Right cardiac atrium (tissue), 5 donors: ENCODE measurements at regions of chr18 and their contacts with region 1.

Region 1: GRCh38 chr18:48785091-48785614 is 165.6 kb downstream of the SMAD7 start:
- DNase-seq: peak in 2 of 3 donors; percentile 37 to 57
- ATAC-seq: no peak
- H3K4me3 ChIP-seq: no peak overlapping the region
- H3K27ac ChIP-seq: no peak overlapping the region
- H3K4me1 ChIP-seq: peaks cover 45% of the 10 kb centered on the region
- H3K27me3 ChIP-seq: no peaks in the 10 kb centered on the region

Region 2: DNA sequence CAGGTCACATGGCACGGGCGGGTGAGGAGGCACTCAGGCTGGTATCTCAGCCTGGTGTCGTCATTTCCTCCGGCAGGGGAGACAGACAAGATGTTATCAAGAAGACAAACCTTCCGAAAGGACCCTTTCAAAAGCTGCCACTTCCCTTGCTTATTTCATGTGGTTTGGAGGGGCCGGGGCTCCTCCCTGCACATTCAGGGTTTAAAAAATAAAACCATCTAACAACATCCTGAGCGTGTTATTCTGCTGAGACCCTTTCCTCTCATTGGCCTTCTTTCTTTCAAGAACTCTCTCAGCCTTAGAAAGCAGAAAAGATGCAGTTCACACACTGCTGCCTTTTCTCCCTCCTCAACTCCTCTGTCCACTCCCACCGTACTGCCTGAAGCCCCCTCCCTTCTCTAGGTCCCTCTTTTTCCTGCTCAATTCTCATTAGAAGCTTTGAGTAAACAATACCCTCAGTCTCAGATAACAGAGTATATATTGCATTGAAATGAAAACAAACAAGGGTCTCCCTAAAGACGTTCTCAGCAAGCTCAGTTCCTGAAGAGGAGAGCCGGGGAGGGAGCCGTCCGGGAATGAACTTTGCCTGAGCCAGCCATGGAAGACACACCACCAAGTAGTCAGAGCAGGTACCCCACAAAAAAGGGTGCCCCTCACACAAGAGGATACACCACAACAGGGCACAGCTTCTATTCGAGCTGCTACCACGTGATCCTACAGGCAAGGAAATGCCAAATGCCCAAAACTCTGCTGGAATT is 155.9 kb after region 1 on chr18:
- intact Hi-C with region 1: loop called in 2 of 4 experiments (anchors 5 kb)
- DNase-seq: peak in 2 of 3 donors; percentile 69 to 81
- ATAC-seq: peak in 1 of 2 donors; percentile 28
- H3K4me3 ChIP-seq: peak overlapping the region; percentile 6
- H3K27ac ChIP-seq: peak overlapping the region; percentile 78
- H3K4me1 ChIP-seq: peaks cover 45% of the 10 kb centered on the region
- H3K27me3 ChIP-seq: no peaks in the 10 kb centered on the region

Region 3: DNA sequence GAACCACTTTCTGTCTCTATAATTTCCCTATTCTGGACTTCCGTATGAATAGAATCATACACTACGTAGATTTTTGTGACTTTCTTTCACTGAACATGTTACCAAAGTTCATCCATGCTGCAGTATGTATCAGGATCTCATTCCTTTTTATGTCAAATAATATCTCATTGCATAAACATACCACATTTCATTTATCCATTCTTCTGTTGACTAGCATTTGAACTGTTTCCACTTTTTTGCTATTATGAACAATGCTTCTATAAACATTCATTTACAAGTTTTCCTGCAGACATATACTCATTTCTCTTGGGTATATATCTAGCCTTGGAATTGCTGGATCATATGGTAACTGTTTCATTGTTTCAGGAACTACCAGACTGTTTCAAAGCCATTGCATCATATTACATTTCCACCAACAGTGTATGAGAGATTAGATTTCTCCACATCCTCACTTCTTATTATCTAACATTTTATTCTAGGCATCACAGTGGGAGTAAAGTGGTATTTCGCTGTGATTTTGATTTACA is 489.1 kb after region 1 on chr18:
- intact Hi-C with region 1: no loop called
- DNase-seq: no peak
- ATAC-seq: no peak
- H3K4me3 ChIP-seq: no peak overlapping the region
- H3K27ac ChIP-seq: no peak overlapping the region
- H3K4me1 ChIP-seq: no peaks in the 10 kb centered on the region
- H3K27me3 ChIP-seq: no peaks in the 10 kb centered on the region